ENCODE measurements at regions of chr6 and their contacts with region 1.

Region 1: GRCh38 chr6:85678602-85679444 is 36.1 kb upstream of the SYNCRIP start:
- DNase-seq: peak; percentile 98
- ATAC-seq: peak; percentile 86
- H3K4me3 Mint-ChIP-seq: peak overlapping the region; percentile 98
- H3K27ac Mint-ChIP-seq: peak overlapping the region; percentile 89
- H3K4me1 Mint-ChIP-seq: peaks cover 52% of the 10 kb centered on the region
- H3K27me3 Mint-ChIP-seq: no peaks in the 10 kb centered on the region

Region 2: GRCh38 chr6:85449818-85450759 is 228.7 kb before region 1 on chr6 and contains the start of gene NT5E:
- CTCF ChIA-PET with region 1: no interaction called
- POLR2A ChIA-PET with region 1: interaction called, 16 read pairs
- DNase-seq: peak; percentile 74
- ATAC-seq: peak; percentile 64
- H3K4me3 Mint-ChIP-seq: peak within 1 kb of the TSS; percentile 93
- H3K27ac Mint-ChIP-seq: peak within 1 kb of the TSS; percentile 89
- H3K4me1 Mint-ChIP-seq: peaks cover 67% of the 10 kb centered on the region
- H3K27me3 Mint-ChIP-seq: peaks cover 11% of the 10 kb centered on the region
- total RNA-seq, gene NT5E: 7.4 to 7.6 TPM

Region 3: DNA sequence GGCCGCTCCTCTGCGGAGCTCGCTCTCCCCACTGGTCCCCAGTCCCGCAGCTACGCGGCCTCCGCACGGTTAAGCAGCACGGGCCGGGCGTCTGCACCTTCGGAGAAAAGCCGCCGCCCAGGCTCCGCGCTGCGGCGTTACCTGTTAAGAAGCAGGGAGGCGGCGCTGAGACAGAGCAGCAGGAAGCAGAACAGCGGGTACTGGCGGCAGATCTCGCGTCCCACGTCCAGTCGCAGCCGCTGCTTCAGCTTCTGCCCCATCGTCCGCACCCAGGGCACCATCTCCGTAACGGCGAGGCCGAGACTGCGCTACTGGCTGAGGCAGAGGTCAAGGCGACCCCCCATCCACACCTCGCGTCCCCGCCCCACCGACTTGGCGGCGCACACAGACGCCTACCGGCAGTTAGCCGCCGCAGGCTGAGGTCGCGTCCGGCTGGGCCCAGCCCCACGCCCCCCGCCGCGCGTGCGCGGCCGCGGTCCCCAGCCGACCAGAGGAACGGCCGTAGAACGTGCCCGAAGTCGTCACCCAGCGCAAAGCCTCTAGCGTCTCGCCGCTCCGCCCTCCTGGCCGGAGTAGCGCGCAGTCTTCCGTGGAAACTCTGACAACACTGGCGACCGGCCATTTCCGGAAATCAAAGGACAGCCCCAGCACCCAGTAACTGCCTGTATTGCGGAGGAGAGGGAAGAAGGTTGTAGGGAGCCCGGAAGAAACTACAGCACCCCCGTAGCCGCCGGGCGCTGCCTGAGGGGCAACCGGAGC is 85.2 kb before region 1 on chr6 and contains the start of gene SNX14:
- CTCF ChIA-PET with region 1: interaction called, 12 read pairs
- POLR2A ChIA-PET with region 1: interaction called, 72 read pairs
- DNase-seq: peak; percentile 87
- ATAC-seq: peak; percentile 85
- H3K4me3 Mint-ChIP-seq: peak within 1 kb of the TSS; percentile 93
- H3K27ac Mint-ChIP-seq: peak within 1 kb of the TSS; percentile 96
- H3K4me1 Mint-ChIP-seq: peaks cover 29% of the 10 kb centered on the region
- H3K27me3 Mint-ChIP-seq: no peaks in the 10 kb centered on the region
- total RNA-seq, gene SNX14: 50.1 to 50.3 TPM

Region 4: DNA sequence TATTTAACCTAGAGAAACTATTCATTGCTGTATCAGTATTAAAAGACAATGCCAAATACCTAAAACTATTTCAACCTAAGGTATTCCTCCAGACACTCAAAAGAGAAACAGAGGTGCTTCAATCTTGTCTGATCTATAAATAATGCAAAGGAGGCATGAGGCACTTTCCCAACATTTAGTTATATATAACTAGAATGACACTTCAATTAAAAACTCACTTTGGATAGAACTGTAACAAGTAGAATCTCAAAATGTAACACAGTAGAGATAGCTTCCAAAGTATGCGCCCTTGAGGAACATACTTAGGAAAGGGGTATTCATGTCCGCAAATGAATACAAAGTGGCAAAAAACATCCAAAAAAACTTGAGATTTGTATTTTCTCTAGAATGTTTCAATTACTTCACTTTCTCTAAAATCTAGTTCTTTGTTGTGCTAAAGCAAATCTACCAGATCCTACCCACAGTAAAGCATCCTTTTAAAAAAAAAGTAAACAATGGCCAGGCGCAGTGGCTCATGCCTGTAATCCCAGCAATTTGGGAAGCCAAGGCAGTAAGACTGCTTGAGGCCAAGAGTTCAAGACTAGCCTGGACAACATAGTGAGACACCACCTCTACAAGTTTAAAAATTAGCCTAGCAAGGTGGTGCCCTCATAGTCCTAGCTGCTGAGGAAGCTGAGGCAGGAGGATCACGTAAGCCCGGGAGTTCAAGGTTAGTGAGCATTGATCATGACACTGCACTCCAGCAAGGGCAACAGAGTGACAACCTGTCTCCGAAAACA is 46.5 kb before region 1 on chr6:
- CTCF ChIA-PET with region 1: interaction called, 4 read pairs
- POLR2A ChIA-PET with region 1: interaction called, 501 read pairs
- DNase-seq: no peak
- ATAC-seq: no peak
- H3K4me3 Mint-ChIP-seq: no peak overlapping the region
- H3K27ac Mint-ChIP-seq: no peak overlapping the region
- H3K4me1 Mint-ChIP-seq: peaks cover 38% of the 10 kb centered on the region
- H3K27me3 Mint-ChIP-seq: no peaks in the 10 kb centered on the region

Region 5: GRCh38 chr6:85650606-85651005 is 28.2 kb before region 1 on chr6:
- CTCF ChIA-PET with region 1: no interaction called
- POLR2A ChIA-PET with region 1: interaction called, 501 read pairs
- DNase-seq: no peak
- ATAC-seq: no peak
- H3K4me3 Mint-ChIP-seq: no peak overlapping the region
- H3K27ac Mint-ChIP-seq: no peak overlapping the region
- H3K4me1 Mint-ChIP-seq: peaks cover under 1% of the 10 kb centered on the region
- H3K27me3 Mint-ChIP-seq: peaks cover 6% of the 10 kb centered on the region

Measured in activated CD8-positive, alpha-beta T cell treated with anti-CD3 and anti-CD28 coated beads, Interleukin-2, amount 10 ng/mL, durations not matched to agents 7 days and 5 days (primary cell).